BJ (cell line): ENCODE measurements at regions of chr17 and their contacts with region 1.

Region 1: DNA sequence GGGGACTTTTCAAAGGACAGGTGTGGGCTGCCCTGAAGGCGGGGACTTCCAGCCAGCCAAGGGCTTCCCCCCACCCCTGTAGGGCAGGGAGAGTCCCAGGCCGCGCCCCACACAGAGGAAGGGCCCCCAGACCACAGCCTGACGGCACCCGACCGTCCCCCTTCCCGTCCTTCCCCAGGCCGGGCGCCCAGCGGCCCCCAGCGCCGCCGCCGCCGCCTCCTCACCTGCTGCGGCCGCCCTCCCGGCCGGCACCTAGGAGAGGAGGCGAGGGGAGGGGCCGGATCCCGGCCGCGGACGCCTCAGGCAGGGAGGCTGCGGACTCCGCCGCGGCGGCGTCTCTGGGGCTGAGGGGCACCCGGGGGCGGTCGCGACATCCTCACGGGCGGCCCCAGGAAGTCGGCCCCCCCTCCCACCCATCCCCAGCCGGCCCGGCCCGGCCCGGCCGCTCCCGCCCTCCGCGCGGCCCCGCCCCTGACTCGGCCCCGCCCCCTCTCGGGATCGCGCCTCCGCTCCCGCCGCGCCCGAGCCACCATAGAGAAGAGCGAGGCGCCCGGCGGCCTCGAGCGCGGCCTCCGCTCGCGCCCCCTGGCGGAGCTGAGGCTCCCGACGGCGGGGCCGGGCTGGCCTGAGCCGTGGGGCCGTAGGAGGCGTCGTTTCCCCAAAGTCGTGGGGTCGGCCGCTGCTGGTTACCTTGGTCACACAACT is 25.5 kb upstream of the RFFL start:
- DNase-seq: no peak
- H3K4me3 ChIP-seq: peak overlapping the region; percentile 85
- H3K27me3 ChIP-seq: no peaks in the 10 kb centered on the region
- CTCF ChIP-seq: peak; percentile 59

Region 2: DNA sequence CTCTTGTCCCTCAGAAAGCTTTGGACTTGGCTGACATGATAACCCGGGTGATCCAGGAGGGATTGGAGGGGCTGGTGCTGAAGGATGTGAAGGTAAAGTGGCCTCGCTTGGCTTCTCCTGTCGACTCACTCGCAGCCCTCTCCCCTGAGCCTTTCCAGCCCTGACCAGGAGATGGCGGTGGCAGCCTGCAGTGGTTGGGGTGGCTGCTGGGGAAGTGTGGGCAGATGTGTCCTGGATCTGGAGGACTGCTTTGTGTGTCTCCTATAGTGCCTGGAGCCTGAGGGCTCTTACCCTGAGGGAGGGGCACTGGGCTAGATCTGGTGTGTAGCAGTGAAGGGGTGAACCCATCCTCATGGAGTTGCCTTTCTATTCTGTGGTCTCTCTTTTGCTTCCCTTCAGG is 90.8 kb before region 1 on chr17:
- CTCF ChIA-PET with region 1: interaction called, 15 read pairs
- POLR2A ChIA-PET with region 1: no interaction called
- DNase-seq: no peak
- H3K4me3 ChIP-seq: no peak overlapping the region
- H3K27me3 ChIP-seq: no peaks in the 10 kb centered on the region
- CTCF ChIP-seq: peak; percentile 90

Region 3: DNA sequence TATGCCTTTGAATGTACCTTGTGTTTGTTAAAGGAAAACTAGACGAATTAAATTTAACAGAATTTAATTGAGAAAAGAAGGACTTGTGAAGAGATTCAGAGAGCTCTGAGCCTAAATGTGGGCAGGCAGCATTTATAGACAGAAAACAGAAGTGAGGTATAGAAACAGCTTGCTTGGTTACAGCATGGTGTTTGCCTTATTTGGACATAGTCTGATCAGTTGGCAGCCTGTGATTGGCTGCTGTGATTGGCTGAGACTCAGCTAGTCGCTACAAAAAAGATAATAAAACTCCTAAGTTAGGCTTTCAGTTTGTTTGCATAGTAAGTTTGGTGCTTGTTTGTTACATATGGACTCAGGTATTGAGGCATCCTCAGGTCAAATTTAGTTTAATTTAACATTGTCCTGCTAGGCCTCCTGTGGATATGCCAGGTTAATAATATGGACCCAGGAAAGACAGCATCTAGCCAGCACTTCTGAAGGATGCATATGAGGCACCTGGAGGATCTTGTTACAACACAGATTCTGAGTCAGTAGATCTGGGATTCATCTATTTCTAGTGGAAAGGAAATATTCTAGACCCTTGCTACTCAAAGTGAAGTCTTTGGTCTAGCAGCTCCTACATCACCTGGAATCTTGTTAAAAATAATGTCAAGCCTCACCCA is 197.2 kb after region 1 on chr17:
- CTCF ChIA-PET with region 1: no interaction called
- POLR2A ChIA-PET with region 1: no interaction called
- DNase-seq: no peak
- H3K4me3 ChIP-seq: no peak overlapping the region
- H3K27me3 ChIP-seq: no peaks in the 10 kb centered on the region
- CTCF ChIP-seq: no peak